ENCODE measurements at regions of chr7 and their contacts with region 1.

Region 1: DNA sequence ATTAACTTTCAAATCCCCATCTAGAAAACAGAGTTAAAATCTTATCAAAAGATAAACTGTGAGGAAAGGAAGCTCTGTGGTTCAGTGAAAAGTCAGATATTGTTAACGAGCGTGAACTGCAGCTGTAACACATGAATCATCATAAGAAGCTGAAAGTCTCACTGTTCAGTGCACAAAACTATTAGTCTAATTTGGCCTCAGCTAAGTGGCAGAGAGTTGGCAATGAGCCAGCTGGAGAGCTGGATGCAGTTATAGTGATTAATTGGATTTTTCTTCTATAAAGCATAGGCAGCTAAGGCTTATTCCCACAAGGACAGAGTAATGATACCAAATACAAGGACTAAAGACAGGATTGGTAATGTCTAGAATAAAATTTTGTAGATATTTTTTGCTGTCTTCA is 101.1 kb upstream of the ABCB5 start:
- DNase-seq: peak; percentile 98
- H3K4me3 ChIP-seq: no peak overlapping the region
- H3K27ac ChIP-seq: peak overlapping the region; percentile 74
- H3K4me1 ChIP-seq: peaks cover 33% of the 10 kb centered on the region
- H3K27me3 ChIP-seq: no peaks in the 10 kb centered on the region
- CTCF ChIP-seq: no peak
- POLR2A ChIP-seq: no peak

Region 2: DNA sequence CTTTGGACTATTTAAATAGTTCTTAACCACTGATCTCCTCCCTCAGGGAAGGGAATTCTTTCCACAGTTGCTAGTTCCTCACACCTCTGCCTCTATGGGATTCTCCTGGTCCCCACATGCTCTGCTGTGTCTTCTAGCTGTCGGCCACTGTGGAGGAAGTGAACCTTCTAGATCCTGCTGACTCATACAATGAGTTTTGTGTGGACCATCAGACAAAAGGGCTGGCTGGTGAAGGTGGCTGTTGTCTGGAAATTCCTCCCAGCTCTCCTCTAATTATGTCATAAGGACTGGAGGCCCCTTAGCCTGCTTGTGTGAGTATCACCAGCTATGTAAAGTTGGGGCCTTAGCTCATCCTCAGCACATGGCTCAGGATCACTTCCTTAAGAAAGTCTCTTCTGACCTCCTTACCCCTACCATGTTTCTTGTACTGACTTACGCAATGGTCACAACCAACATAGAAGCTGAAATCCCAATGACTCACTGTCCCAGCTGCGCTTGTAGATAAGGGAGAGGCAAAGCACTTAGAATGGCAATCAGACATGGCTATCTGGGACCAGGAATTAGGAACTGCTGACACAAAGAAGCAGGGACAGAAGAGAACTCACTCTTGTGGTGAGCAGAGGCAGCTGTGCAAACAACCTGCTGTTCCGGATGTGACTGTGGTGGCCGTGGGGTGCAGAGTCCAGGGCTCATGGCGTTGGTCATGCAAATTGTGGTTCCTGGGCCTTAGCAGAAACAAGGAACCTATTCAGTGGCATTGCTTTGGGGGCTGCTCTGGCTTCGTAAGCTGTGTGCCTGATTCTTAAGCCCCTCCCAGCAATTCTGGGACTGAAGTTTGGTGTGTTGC is 294.7 kb before region 1 on chr7:
- CTCF ChIA-PET with region 1: no interaction called
- POLR2A ChIA-PET with region 1: no interaction called
- dilution Hi-C with region 1: no loop called
- intact Hi-C with region 1: loop called (anchors 10 kb)
- DNase-seq: peak; percentile 95
- H3K4me3 ChIP-seq: no peak overlapping the region
- H3K27ac ChIP-seq: peak overlapping the region; percentile 83
- H3K4me1 ChIP-seq: peaks cover 21% of the 10 kb centered on the region
- H3K27me3 ChIP-seq: no peaks in the 10 kb centered on the region
- CTCF ChIP-seq: no peak
- POLR2A ChIP-seq: peak; percentile 78

Region 3: GRCh38 chr7:20560325-20561180 is 46.2 kb after region 1 on chr7:
- CTCF ChIA-PET with region 1: no interaction called
- POLR2A ChIA-PET with region 1: no interaction called
- dilution Hi-C with region 1: no loop called
- intact Hi-C with region 1: loop called (anchors 1 kb)
- DNase-seq: no peak
- H3K4me3 ChIP-seq: no peak overlapping the region
- H3K27ac ChIP-seq: peak overlapping the region; percentile 100
- H3K4me1 ChIP-seq: peaks cover 24% of the 10 kb centered on the region
- H3K27me3 ChIP-seq: no peaks in the 10 kb centered on the region
- CTCF ChIP-seq: no peak
- POLR2A ChIP-seq: no peak

Measured in endothelial cell of umbilical vein (primary cell).